Panc1 (cell line): ENCODE measurements at regions of chr10 and their contacts with region 1.

Region 1: DNA sequence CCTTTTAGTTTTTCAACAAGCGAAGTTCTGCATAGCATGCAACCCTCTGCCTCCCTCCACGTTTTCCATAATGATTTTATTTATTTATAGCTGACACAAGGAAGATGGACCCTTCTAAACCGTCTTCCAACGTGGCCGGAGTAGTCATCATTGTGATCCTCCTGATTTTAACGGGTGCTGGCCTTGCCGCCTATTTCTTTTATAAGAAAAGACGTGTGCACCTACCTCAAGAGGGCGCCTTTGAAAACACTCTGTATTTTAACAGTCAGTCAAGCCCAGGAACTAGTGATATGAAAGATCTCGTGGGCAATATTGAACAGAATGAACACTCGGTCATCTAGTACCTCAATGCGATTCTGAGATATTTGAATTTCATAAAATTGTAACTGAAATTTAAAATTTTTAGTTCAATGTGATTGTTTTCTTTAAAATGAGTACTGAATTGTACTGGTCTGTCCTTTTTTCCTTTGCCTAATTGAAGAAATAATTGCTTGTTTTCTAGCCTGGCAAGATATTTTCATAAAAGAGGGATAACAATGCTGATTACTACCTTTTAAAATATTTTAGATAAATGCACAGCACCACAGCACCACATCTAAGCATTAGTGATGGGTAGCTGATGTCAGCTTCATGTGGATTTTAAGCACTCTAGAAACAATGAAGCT is 41.5 kb upstream of the SLC39A12 start:
- DNase-seq: peak; percentile 13
- ATAC-seq: peak; percentile 65; the same call in 1 of the 2 replicates
- H3K4me3 ChIP-seq: no peak overlapping the region
- H3K27ac ChIP-seq: no peak overlapping the region
- H3K4me1 ChIP-seq: no peaks in the 10 kb centered on the region
- H3K27me3 ChIP-seq: peaks cover 2% of the 10 kb centered on the region; the same call in 1 of the 2 replicates
- CTCF ChIP-seq: peak; percentile 75

Region 2: DNA sequence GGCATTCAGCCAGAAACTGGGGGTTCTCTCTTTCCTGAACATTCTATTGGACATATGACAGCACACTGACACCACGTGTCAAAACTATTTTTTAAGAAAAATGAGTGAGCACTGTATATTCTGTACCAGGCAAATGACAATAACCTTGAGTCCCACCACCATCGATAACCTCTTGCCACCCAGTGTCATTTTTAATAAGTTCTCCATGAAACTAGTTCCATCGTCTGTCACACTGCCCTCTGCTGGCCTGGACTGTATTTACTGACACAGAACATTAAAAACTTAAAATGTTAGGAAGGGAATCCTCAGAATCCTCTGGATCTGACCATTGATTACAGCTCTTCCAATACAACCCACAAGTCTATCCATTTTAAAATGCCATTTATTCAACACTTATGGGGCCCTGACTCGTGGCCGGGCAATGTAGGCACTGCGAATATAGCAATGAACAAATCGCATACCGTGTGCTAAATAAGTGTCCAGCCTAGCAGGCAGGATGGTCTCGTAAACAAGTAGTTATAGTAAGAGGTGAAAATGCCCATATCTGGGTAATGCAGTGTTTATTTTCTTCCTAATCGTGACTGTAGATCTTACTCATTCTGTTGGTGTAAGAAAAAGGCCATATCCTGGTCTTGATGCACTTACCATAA is 194.1 kb after region 1 on chr10:
- CTCF ChIA-PET with region 1: no interaction called
- POLR2A ChIA-PET with region 1: no interaction called
- in situ Hi-C with region 1: no loop called
- intact Hi-C with region 1: loop called (anchors 10 kb)
- DNase-seq: peak; percentile 5
- ATAC-seq: no peak
- H3K4me3 ChIP-seq: no peak overlapping the region
- H3K27ac ChIP-seq: no peak overlapping the region
- H3K4me1 ChIP-seq: no peaks in the 10 kb centered on the region
- H3K27me3 ChIP-seq: no peaks in the 10 kb centered on the region
- CTCF ChIP-seq: peak; percentile 75

Region 3: GRCh38 chr10:18214691-18215563 is 304.7 kb after region 1 on chr10:
- CTCF ChIA-PET with region 1: interaction called, 3 read pairs
- POLR2A ChIA-PET with region 1: no interaction called
- in situ Hi-C with region 1: no loop called
- intact Hi-C with region 1: loop called (anchors 2 kb)
- DNase-seq: peak; percentile 24
- ATAC-seq: 0 out of 2 replicates have a peak, but pooled peaks have one; percentile 63
- H3K4me3 ChIP-seq: no peak overlapping the region
- H3K27ac ChIP-seq: no peak overlapping the region
- H3K4me1 ChIP-seq: no peaks in the 10 kb centered on the region
- H3K27me3 ChIP-seq: no peaks in the 10 kb centered on the region
- CTCF ChIP-seq: peak; percentile 80